CD4-positive, alpha-beta T cell (primary cell): ENCODE measurements at regions of chr21 and their contacts with region 1.

Region 1: DNA sequence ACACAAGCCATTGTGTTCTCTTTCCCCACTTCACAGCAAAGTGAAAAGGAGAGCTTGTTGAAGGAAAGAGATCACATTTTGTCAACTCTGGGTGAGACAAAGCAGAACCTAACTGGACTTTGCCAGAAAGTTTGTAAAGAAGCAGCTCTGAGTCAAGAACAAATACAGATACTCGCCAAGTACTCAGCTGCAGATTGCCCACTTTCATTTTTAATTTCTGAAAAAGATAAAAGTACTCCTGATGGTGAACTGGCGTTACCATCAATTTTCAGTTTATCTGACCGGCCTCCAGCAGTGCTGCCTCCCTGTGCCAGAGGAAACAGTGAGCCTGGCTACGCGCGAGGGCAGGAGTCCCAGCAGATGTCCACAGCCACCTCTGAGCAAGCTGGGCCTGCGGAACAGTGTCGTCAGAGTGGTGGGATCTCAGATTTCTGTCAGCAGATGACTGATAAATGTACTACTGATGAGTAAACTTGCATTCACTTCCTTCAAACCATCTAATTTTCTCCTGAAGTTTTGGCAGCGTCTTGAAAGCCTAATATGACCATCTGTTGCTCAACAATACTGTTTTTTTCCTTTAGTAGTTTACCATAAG is 43.7 kb downstream of the BACH1 start:
- DNase-seq: peak in 1 of 14 experiments; percentile 60
- ATAC-seq: no peak
- H3K4me3 ChIP-seq: no peak overlapping the region
- H3K4me3 Mint-ChIP-seq: no peak overlapping the region
- H3K27ac ChIP-seq: no peak overlapping the region
- H3K27ac Mint-ChIP-seq: no peak overlapping the region
- H3K4me1 ChIP-seq: peaks cover 5% of the 10 kb centered on the region
- H3K4me1 Mint-ChIP-seq: peaks cover 17% of the 10 kb centered on the region
- H3K27me3 ChIP-seq: no peaks in the 10 kb centered on the region
- H3K27me3 Mint-ChIP-seq: no peaks in the 10 kb centered on the region
- CTCF ChIP-seq: no peak

Region 2: GRCh38 chr21:29265690-29266479 is 76.6 kb before region 1 on chr21:
- CTCF ChIA-PET with region 1: no interaction called
- POLR2A ChIA-PET with region 1: no interaction called
- intact Hi-C with region 1: loop called in 1 of 2 experiments (anchors 10 kb)
- DNase-seq: peak in 2 of 14 experiments; percentile 16 to 29
- ATAC-seq: no peak
- H3K4me3 ChIP-seq: no peak overlapping the region
- H3K4me3 Mint-ChIP-seq: no peak overlapping the region
- H3K27ac ChIP-seq: no peak overlapping the region
- H3K27ac Mint-ChIP-seq: no peak overlapping the region
- H3K4me1 ChIP-seq: no peaks in the 10 kb centered on the region
- H3K4me1 Mint-ChIP-seq: no peaks in the 10 kb centered on the region
- H3K27me3 ChIP-seq: no peaks in the 10 kb centered on the region
- H3K27me3 Mint-ChIP-seq: no peaks in the 10 kb centered on the region
- CTCF ChIP-seq: no peak